ENCODE measurements at regions of chr20 and their contacts with region 1.

Region 1: DNA sequence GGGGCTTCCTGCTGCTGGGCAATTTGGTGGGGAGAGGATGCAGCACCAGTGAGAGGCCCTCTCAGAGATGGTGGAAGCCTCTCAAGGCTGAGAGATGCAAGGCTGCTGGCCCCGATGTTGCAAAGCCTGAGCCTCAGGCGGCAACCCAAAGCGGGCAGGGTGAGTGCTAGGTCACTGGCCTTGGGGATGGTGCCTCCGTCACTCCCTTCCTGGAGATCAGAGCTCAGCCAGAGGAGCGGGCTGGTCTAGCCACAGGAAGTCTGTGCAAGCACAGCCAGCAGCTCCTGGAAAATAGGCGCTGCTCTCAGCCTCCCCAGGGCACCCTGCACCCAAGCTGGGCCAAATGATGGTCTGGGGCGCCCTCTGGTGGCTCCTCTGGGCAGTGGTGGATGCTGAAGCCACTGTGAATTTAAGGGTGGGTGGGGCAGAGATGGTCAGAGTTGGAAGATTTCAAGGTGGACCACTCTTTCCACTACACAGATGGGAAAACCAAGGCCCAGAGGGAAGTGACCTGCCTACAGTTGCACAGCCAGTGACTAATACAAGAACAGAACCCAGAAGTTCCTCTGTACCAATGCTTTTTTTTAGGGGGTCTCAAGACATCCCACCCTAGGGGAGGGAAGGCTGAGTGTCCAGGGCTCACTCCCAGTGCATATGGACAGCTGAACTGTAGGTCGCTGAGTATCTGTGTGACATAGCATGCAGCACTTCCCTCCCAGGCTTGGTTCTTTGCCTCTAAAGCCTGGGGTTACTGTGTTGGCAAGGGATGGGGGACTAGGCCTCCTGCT is 20.8 kb downstream of the C20orf203 start:
- H3K4me3 Mint-ChIP-seq: no peak overlapping the region
- H3K27ac Mint-ChIP-seq: no peak overlapping the region
- H3K4me1 Mint-ChIP-seq: peaks cover 41% of the 10 kb centered on the region
- H3K27me3 Mint-ChIP-seq: peaks cover 8% of the 10 kb centered on the region

Region 2: GRCh38 chr20:32109392-32110172 is 543.4 kb before region 1 on chr20 and contains the start of gene TM9SF4:
- intact Hi-C with region 1: loop called (anchors 10 kb)
- H3K4me3 Mint-ChIP-seq: peak within 1 kb of the TSS; percentile 97
- H3K27ac Mint-ChIP-seq: peak within 1 kb of the TSS; percentile 93
- H3K4me1 Mint-ChIP-seq: peaks cover 47% of the 10 kb centered on the region
- H3K27me3 Mint-ChIP-seq: no peaks in the 10 kb centered on the region

Region 3: DNA sequence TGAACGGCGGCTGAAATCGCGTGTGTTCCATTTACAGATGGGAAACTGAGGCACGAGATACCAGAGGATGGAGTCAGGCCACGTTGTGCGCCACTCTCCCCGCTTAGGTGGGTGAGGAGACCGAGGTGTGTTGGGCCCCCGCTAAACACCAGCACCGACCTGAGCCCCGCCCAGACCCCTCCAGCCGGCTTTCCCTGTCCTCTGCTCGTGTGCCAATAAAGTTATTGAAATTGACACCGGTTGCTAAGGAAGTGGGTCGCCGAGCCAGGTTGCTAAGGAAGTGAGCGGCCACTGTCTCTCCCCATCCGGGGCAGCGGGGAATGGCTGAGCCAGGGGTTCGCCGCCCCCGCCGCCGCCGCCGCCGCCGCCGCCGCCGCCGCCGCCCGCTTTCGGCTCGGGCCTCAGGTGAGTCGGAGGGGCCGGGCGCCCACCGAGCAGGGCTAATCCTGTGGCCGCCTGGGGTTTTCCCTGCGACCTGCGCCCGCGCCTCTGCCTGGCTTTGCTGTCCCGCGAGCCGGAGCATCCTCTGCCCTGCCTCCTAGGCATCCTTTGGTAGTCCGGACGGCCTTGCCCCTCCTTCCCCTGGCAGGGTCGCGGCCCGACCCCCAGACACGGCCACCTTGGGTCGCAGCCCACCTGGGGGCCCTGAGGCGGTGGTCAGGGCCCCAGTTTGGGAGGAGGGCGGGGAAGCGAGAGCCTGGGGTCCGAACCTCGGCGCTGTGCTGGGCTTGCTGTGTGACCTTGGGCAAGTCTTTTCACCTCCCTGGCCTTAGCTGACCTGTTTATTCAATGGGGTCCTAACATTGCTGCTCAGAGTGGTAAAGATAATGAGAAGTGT is 375.4 kb before region 1 on chr20 and contains the start of gene KIF3B:
- intact Hi-C with region 1: no loop called
- H3K4me3 Mint-ChIP-seq: peak within 1 kb of the TSS; percentile 85
- H3K27ac Mint-ChIP-seq: peak within 1 kb of the TSS; percentile 70
- H3K4me1 Mint-ChIP-seq: peaks cover 25% of the 10 kb centered on the region
- H3K27me3 Mint-ChIP-seq: no peaks in the 10 kb centered on the region

Region 4: DNA sequence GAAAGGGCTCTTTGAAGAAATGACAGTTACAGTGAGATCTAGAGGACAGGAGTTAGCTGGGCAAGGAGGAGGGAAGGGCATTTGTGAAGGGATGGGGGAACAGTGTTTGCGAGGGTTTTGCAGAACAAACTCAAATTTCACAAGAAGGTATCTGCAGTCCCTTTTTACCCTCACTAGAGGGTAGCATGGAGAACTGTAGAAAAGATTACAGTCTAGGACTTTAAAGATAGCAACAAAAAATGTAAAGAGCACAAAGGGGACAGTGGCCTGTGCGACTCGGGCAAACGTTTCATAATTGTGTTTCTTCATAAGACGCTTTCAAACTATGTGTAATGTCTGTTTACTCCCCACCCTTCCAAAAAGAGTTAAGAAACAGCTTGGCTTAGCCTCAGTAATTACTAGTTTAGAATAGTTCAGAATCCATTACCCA is 316.0 kb before region 1 on chr20:
- intact Hi-C with region 1: loop called (anchors 5 kb)
- H3K4me3 Mint-ChIP-seq: no peak overlapping the region
- H3K27ac Mint-ChIP-seq: no peak overlapping the region
- H3K4me1 Mint-ChIP-seq: peaks cover 51% of the 10 kb centered on the region
- H3K27me3 Mint-ChIP-seq: no peaks in the 10 kb centered on the region

Region 5: GRCh38 chr20:32521780-32522525 is 131.0 kb before region 1 on chr20:
- intact Hi-C with region 1: loop called (anchors 1 kb)
- H3K4me3 Mint-ChIP-seq: no peak overlapping the region
- H3K27ac Mint-ChIP-seq: no peak overlapping the region
- H3K4me1 Mint-ChIP-seq: peaks cover 65% of the 10 kb centered on the region
- H3K27me3 Mint-ChIP-seq: peaks cover 6% of the 10 kb centered on the region

Region 6: GRCh38 chr20:32582659-32583580 is 70.0 kb before region 1 on chr20:
- intact Hi-C with region 1: loop called (anchors 1 kb)
- H3K4me3 Mint-ChIP-seq: peak overlapping the region; percentile 64
- H3K27ac Mint-ChIP-seq: peak overlapping the region; percentile 76
- H3K4me1 Mint-ChIP-seq: peaks cover 51% of the 10 kb centered on the region
- H3K27me3 Mint-ChIP-seq: peaks cover 29% of the 10 kb centered on the region

Measured in dendritic cell treated with granulocyte-macrophage colony-stimulating factor and Interleukin-4, amounts not matched to agents 40 ng/mL and 50 ng/mL, for 4 days (primary cell).